CD4-positive, alpha-beta memory T cell (primary cell): ENCODE measurements at regions of chr6 and their contacts with region 1.

Region 1: DNA sequence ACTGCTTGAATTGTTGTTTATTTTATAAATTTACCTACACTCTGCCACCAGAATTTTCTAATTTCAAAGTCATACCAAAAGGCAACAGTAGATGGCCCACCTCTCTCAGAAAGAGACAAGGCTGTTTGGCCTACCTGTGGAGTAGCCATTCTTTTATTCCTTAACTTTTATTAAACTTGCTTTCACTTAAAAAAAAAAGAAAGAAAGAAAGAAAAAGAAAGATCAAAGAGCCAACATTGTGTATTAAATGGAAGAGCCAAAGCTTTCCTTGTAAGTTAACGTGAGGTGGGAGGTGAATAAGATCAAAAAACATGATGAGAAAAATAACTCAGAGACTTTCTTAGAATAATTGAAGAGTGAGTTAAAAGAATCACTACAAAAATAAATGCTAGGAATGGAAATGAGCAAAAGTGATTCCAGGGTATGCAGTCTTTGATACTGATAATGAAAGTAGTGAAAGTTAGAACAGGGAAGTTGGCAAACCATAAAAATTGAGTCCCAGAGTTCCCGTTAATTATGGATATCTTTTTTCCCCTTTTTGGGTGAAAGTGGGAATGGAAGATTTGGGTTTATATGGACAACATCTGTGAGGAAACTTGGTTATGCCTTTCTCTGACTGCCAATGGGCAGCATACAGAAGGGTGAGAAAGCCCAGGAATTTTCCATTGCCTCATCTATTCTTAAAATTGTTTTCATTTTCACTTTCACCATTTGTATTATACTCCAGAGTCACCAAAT is 35.9 kb upstream of the MYB start:
- DNase-seq: peak in 4 of 5 donors; percentile 35 to 50 (median 40)
- H3K4me3 ChIP-seq: no peak overlapping the region
- H3K4me3 Mint-ChIP-seq: peak overlapping the region in 7 of 8 donors; percentile 18 to 83 (median 54)
- H3K27ac ChIP-seq: no peak overlapping the region
- H3K27ac Mint-ChIP-seq: peak overlapping the region; percentile 51 to 94 (median 79)
- H3K4me1 ChIP-seq: peaks cover 12% of the 10 kb centered on the region
- H3K4me1 Mint-ChIP-seq: peaks cover 14 to 30% (median 25%) of the 10 kb centered on the region in 4 donors
- H3K27me3 ChIP-seq: no peaks in the 10 kb centered on the region
- H3K27me3 Mint-ChIP-seq: no peaks in the 10 kb centered on the region

Region 2: DNA sequence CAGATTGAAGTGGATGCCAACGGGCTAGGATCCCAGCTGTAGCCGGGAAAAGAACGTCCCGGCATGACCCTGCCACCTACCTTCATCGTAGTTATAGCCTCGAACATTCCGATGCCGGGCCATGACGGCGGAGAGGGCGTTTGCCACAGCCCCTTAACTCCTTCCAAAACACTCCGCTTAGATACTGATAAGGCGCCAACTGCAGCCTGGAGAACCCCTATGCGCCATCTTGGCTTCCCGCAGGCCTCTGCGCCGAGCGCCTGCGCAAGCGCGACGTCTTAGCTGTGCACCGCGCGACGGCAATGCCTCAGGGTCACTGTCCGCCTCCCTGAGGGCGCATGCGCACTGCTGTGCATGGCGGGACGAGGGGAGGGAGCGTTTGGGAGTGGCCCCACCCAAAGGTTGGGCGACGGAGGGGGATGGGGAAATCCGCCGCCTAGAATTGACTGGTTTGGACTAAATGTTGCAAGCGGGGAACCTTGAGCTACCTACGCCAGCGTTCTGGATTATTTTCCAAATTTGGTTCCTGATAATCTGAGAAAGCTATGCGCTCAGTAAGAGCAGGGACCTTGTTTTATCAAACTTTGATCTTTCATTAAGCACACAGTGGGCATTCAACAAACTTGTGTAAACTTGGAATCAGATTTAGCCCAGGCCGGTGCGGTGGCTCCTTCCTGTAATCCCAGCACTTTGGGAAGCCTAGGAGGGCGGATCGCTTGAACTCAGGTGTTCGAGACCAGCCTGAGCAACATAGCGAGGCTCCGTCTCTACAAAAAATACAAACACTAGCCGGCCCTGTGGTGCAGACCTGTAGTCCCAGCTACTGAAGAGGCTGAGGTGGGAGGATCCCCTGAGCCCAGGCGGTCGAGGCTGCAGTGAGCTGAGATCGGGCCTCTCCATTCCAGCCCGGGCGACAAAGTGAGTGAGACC is 90.4 kb before region 1 on chr6 and contains the start of gene HBS1L:
- CTCF ChIA-PET with region 1: interaction called, 15 read pairs
- POLR2A ChIA-PET with region 1: interaction called, 3 read pairs
- intact Hi-C with region 1: no loop called
- DNase-seq: peak; percentile 95 to 97 (median 96)
- H3K4me3 ChIP-seq: peak within 1 kb of the TSS; percentile 54 to 91
- H3K4me3 Mint-ChIP-seq: peak within 1 kb of the TSS; percentile 93 to 99 (median 97)
- H3K27ac ChIP-seq: peak within 1 kb of the TSS; percentile 91
- H3K27ac Mint-ChIP-seq: peak within 1 kb of the TSS; percentile 96 to 99 (median 99)
- H3K4me1 ChIP-seq: peaks cover 37% of the 10 kb centered on the region
- H3K4me1 Mint-ChIP-seq: peaks cover 27 to 44% (median 37%) of the 10 kb centered on the region in 4 donors
- H3K27me3 ChIP-seq: no peaks in the 10 kb centered on the region
- H3K27me3 Mint-ChIP-seq: no peaks in the 10 kb centered on the region
- total RNA-seq, gene HBS1L: 63.8 to 69.9 TPM

Region 3: GRCh38 chr6:135088818-135089809 is 56.1 kb before region 1 on chr6:
- CTCF ChIA-PET with region 1: interaction called, 20 read pairs
- POLR2A ChIA-PET with region 1: interaction called, 3 read pairs
- intact Hi-C with region 1: loop called (anchors 2 kb)
- DNase-seq: peak; percentile 24 to 65 (median 34)
- H3K4me3 ChIP-seq: peak overlapping the region; percentile 13 to 44
- H3K4me3 Mint-ChIP-seq: peak overlapping the region; percentile 64 to 87 (median 80)
- H3K27ac ChIP-seq: no peak overlapping the region
- H3K27ac Mint-ChIP-seq: peak overlapping the region; percentile 62 to 95 (median 82)
- H3K4me1 ChIP-seq: peaks cover 61% of the 10 kb centered on the region
- H3K4me1 Mint-ChIP-seq: peaks cover 36 to 68% (median 53%) of the 10 kb centered on the region in 4 donors
- H3K27me3 ChIP-seq: no peaks in the 10 kb centered on the region
- H3K27me3 Mint-ChIP-seq: no peaks in the 10 kb centered on the region

Region 4: DNA sequence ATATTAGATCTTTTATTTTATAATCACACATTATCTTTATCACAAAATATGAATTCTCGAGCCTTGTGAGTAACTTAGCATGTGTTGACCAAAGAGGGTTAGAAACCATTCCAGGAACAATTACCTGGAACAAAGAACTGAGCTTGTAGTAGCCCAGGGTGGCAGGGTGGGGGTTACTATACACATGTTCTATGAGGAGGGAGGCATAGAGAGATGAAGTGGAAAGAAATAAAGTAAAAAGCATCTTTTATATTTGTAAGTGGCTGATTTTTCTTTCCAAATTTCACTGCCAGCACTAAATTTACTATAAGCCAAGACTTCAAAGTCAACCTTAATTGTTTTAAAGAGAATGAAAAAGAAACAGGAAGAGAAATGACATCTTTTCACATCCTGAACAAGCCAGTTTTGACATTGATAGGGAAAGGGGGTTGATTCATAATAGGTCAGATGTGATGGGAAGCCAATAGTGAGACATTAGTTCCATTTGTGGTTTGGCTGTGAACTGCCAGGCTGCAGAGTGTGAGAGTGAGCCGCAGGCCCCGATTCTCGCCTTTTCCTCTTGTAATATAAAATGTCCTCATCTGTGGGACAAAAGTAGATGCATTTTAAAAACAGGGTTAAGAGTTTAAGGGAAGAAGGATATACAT is 16.8 kb before region 1 on chr6:
- CTCF ChIA-PET with region 1: interaction called, 24 read pairs
- POLR2A ChIA-PET with region 1: interaction called, 4 read pairs
- intact Hi-C with region 1: no loop called
- DNase-seq: peak; percentile 61 to 73 (median 70)
- H3K4me3 ChIP-seq: no peak overlapping the region
- H3K4me3 Mint-ChIP-seq: peak overlapping the region; percentile 21 to 91 (median 82)
- H3K27ac ChIP-seq: peak overlapping the region; percentile 25
- H3K27ac Mint-ChIP-seq: peak overlapping the region; percentile 90 to 98 (median 95)
- H3K4me1 ChIP-seq: peaks cover 23% of the 10 kb centered on the region
- H3K4me1 Mint-ChIP-seq: peaks cover 15 to 34% (median 30%) of the 10 kb centered on the region in 4 donors
- H3K27me3 ChIP-seq: no peaks in the 10 kb centered on the region
- H3K27me3 Mint-ChIP-seq: no peaks in the 10 kb centered on the region

Region 5: GRCh38 chr6:135183532-135184440 is 38.6 kb after region 1 on chr6:
- CTCF ChIA-PET with region 1: interaction called, 66 read pairs
- POLR2A ChIA-PET with region 1: interaction called, 7 read pairs
- intact Hi-C with region 1: loop called (anchors 1 kb)
- DNase-seq: peak; percentile 65 to 79 (median 71)
- H3K4me3 ChIP-seq: peak overlapping the region; percentile 51 to 57
- H3K4me3 Mint-ChIP-seq: peak overlapping the region; percentile 87 to 96 (median 92)
- H3K27ac ChIP-seq: no peak overlapping the region
- H3K27ac Mint-ChIP-seq: peak overlapping the region; percentile 17 to 87 (median 57)
- H3K4me1 ChIP-seq: peaks cover 12% of the 10 kb centered on the region
- H3K4me1 Mint-ChIP-seq: peaks cover 8 to 28% (median 17%) of the 10 kb centered on the region in 4 donors
- H3K27me3 ChIP-seq: no peaks in the 10 kb centered on the region
- H3K27me3 Mint-ChIP-seq: no peaks in the 10 kb centered on the region

Region 6: GRCh38 chr6:135423649-135424128 is 278.5 kb after region 1 on chr6:
- CTCF ChIA-PET with region 1: interaction called, 26 read pairs
- POLR2A ChIA-PET with region 1: no interaction called
- intact Hi-C with region 1: loop called (anchors 1 kb)
- DNase-seq: peak in 4 of 5 donors; percentile 13 to 24 (median 21)
- H3K4me3 ChIP-seq: no peak overlapping the region
- H3K4me3 Mint-ChIP-seq: no peak overlapping the region
- H3K27ac ChIP-seq: no peak overlapping the region
- H3K27ac Mint-ChIP-seq: no peak overlapping the region
- H3K4me1 ChIP-seq: no peaks in the 10 kb centered on the region
- H3K4me1 Mint-ChIP-seq: no peaks in the 10 kb centered on the region
- H3K27me3 ChIP-seq: no peaks in the 10 kb centered on the region
- H3K27me3 Mint-ChIP-seq: no peaks in the 10 kb centered on the region